Caco-2 (cell line): ENCODE measurements at regions of chr2 and their contacts with region 1.

Region 1: GRCh38 chr2:188303363-188304031 is 11.8 kb downstream of the GULP1 start:
- DNase-seq: peak; percentile 60 to 61
- H3K4me3 ChIP-seq: no peak overlapping the region
- H3K4me3 Mint-ChIP-seq: peak overlapping the region; percentile 22
- H3K27ac Mint-ChIP-seq: peak overlapping the region; percentile 41
- H3K4me1 ChIP-seq: peaks cover 31% of the 10 kb centered on the region
- H3K4me1 Mint-ChIP-seq: peaks cover 38% of the 10 kb centered on the region
- H3K27me3 ChIP-seq: no peaks in the 10 kb centered on the region
- H3K27me3 Mint-ChIP-seq: no peaks in the 10 kb centered on the region
- CTCF ChIP-seq: no peak

Region 2: DNA sequence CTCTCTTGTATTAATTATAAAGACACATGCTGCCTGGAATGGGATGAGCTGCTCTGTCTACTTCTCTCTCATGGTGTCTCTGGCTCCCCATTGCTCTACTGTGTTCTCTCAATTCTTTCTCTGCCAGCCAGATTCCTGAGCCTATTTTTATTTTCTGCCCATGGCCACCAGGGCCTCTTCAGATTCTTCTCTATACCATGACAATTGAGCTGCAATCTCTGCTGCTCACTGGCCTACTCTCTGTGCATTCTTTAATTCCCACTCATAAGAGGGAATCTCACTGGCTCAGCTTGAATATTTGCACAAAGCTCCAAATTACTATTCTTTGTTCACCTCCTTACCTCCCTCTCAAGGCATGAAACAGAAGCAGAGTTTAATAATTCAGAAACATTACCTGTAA is 173.2 kb before region 1 on chr2:
- CTCF ChIA-PET with region 1: no interaction called
- POLR2A ChIA-PET with region 1: no interaction called
- intact Hi-C with region 1: no loop called
- DNase-seq: no peak
- H3K4me3 ChIP-seq: no peak overlapping the region
- H3K4me3 Mint-ChIP-seq: no peak overlapping the region
- H3K27ac Mint-ChIP-seq: no peak overlapping the region
- H3K4me1 ChIP-seq: no peaks in the 10 kb centered on the region
- H3K4me1 Mint-ChIP-seq: no peaks in the 10 kb centered on the region
- H3K27me3 ChIP-seq: no peaks in the 10 kb centered on the region
- H3K27me3 Mint-ChIP-seq: no peaks in the 10 kb centered on the region
- CTCF ChIP-seq: no peak

Region 3: DNA sequence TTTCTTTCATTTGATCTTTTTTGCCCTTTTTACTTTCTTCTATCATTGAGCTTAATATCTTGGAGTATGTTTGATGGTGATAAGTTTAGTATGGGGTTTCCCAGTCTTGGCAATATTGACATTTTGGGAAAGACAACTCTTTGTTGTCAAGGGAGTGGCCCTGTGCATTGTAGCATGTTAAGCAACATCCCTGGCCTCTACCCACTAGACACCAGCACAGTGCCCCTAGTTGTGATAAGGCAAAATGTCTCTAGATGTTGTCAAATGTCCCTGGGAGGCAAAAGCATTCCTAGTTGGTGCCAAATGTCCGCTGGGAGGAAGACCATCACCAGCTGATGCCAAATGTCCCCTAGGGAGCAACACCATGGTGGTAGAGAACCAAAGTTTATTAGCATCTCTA is 16.3 kb after region 1 on chr2:
- CTCF ChIA-PET with region 1: no interaction called
- POLR2A ChIA-PET with region 1: no interaction called
- intact Hi-C with region 1: loop called (anchors 1 kb)
- DNase-seq: peak in 1 of 2 experiments; percentile 10
- H3K4me3 ChIP-seq: no peak overlapping the region
- H3K4me3 Mint-ChIP-seq: no peak overlapping the region
- H3K27ac Mint-ChIP-seq: no peak overlapping the region
- H3K4me1 ChIP-seq: no peaks in the 10 kb centered on the region; the same call in 1 of the 2 replicates
- H3K4me1 Mint-ChIP-seq: peaks cover 20% of the 10 kb centered on the region
- H3K27me3 ChIP-seq: no peaks in the 10 kb centered on the region
- H3K27me3 Mint-ChIP-seq: no peaks in the 10 kb centered on the region
- CTCF ChIP-seq: peak in 1 of 2 experiments; percentile 20

Region 4: DNA sequence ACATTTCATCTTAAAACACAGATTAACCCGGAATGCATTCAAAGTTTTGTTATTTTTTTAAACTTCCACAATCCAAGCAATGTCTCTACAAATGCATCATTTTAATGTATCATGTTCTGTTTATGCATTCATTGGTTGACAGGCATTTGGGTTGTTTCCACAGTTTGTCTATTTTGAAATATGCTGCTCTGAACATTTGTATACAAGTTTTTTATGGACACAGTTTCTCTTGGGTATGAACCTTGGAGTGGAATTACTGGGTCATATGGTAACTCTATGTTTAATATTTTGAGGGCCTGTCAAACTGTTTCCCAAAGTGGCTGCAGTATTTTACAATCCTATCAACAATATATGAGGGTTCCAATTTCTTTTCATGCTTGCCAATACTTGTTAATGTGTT is 45.5 kb after region 1 on chr2:
- CTCF ChIA-PET with region 1: no interaction called
- POLR2A ChIA-PET with region 1: no interaction called
- intact Hi-C with region 1: loop called (anchors 1 kb)
- DNase-seq: no peak
- H3K4me3 ChIP-seq: no peak overlapping the region
- H3K4me3 Mint-ChIP-seq: no peak overlapping the region
- H3K27ac Mint-ChIP-seq: no peak overlapping the region
- H3K4me1 ChIP-seq: no peaks in the 10 kb centered on the region
- H3K4me1 Mint-ChIP-seq: no peaks in the 10 kb centered on the region
- H3K27me3 ChIP-seq: no peaks in the 10 kb centered on the region
- H3K27me3 Mint-ChIP-seq: no peaks in the 10 kb centered on the region
- CTCF ChIP-seq: no peak

Region 5: GRCh38 chr2:188551671-188552070 is 248.2 kb after region 1 on chr2:
- CTCF ChIA-PET with region 1: no interaction called
- POLR2A ChIA-PET with region 1: no interaction called
- intact Hi-C with region 1: no loop called
- DNase-seq: no peak
- H3K4me3 ChIP-seq: no peak overlapping the region
- H3K4me3 Mint-ChIP-seq: no peak overlapping the region
- H3K27ac Mint-ChIP-seq: no peak overlapping the region
- H3K4me1 ChIP-seq: no peaks in the 10 kb centered on the region
- H3K4me1 Mint-ChIP-seq: no peaks in the 10 kb centered on the region
- H3K27me3 ChIP-seq: no peaks in the 10 kb centered on the region
- H3K27me3 Mint-ChIP-seq: no peaks in the 10 kb centered on the region
- CTCF ChIP-seq: no peak